Activated CD8-positive, alpha-beta T cell treated with anti-CD3 and anti-CD28 coated beads, Interleukin-2, amount 10 ng/mL, durations not matched to agents 7 days and 5 days (primary cell): ENCODE measurements at regions of chr9 and their contacts with region 1.

Region 1: DNA sequence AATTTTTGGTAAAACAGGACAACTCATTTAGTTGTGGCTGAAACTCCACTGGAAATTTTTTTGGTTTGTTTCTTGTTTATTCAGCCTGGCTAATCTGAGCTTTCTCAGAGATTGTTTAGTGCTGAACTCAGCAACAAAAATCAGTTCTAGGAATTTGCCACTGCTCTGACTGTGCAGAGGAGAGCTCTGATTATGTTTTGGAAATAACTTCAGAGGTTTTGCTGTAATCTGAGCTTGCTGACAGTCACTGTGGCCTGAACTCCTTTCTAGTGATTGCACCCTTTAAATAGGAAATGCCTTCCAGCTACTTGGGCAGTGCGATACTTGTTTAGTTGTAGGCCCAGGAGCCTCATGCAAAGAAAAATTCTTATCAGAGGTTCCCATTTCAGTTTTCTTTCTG is 60.2 kb downstream of the OSTF1 start:
- DNase-seq: peak; percentile 44
- ATAC-seq: peak; percentile 55
- H3K4me3 Mint-ChIP-seq: peak overlapping the region; percentile 54
- H3K27ac Mint-ChIP-seq: peak overlapping the region; percentile 96
- H3K4me1 Mint-ChIP-seq: peaks cover 85% of the 10 kb centered on the region
- H3K27me3 Mint-ChIP-seq: no peaks in the 10 kb centered on the region

Region 2: GRCh38 chr9:75071530-75072124 is 76.9 kb before region 1 on chr9:
- CTCF ChIA-PET with region 1: no interaction called
- POLR2A ChIA-PET with region 1: no interaction called
- DNase-seq: peak; percentile 61
- ATAC-seq: peak; percentile 81
- H3K4me3 Mint-ChIP-seq: no peak overlapping the region
- H3K27ac Mint-ChIP-seq: peak overlapping the region; percentile 75
- H3K4me1 Mint-ChIP-seq: peaks cover 14% of the 10 kb centered on the region
- H3K27me3 Mint-ChIP-seq: no peaks in the 10 kb centered on the region

Region 3: GRCh38 chr9:75088260-75088905 is 60.2 kb before region 1 on chr9 and contains the start of gene OSTF1:
- CTCF ChIA-PET with region 1: interaction called, 8 read pairs
- POLR2A ChIA-PET with region 1: interaction called, 26 read pairs
- DNase-seq: peak; percentile 94
- ATAC-seq: peak; percentile 92
- H3K4me3 Mint-ChIP-seq: peak within 1 kb of the TSS; percentile 95
- H3K27ac Mint-ChIP-seq: peak within 1 kb of the TSS; percentile 97
- H3K4me1 Mint-ChIP-seq: peaks cover 62% of the 10 kb centered on the region
- H3K27me3 Mint-ChIP-seq: no peaks in the 10 kb centered on the region
- total RNA-seq, gene OSTF1: 126 to 132 TPM